ENCODE measurements at regions of chr19 and their contacts with region 1.

Region 1: GRCh38 chr19:38964738-38965137 is 10.8 kb downstream of the FBXO17 start:
- DNase-seq: no peak
- ATAC-seq: no peak
- H3K4me3 Mint-ChIP-seq: no peak overlapping the region
- H3K27ac Mint-ChIP-seq: no peak overlapping the region
- H3K4me1 Mint-ChIP-seq: peaks cover 3% of the 10 kb centered on the region
- H3K27me3 Mint-ChIP-seq: peaks cover 29% of the 10 kb centered on the region

Region 2: DNA sequence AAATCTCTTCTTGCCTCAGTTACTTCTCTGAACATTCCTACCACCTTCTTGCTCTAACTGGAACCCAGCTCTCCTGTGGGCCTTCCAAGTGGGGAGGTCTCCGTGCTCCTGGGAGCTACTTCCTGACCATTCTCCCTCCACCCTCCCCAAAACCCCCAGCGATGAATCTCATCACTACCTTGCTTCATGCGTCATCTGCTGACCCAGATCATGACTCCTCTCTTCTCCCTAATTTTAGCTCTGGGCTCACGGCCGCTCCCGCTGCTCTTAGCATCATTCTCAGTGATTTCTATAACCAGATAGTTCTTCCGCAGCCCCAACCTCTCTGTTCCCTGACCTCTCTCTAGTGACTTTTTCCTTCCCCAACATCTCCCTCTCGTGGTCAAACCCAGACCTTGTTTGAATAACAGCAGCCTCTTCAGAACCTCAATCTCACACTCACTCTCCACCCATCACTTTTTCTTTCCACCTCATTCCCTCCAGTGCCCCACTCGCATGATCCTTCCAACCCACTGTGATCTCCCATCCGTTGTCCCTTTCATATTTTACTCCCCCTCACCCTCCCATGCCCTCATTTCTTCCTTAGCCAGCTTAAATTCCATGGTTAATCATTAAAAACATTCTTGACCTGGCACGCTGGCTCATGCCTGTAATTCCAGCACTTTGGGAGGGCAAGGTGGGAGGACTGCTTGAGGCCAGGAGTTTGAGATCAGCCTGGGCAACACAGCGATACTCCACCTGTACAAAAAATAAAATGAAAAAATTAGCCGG is 12.2 kb before region 1 on chr19:
- CTCF ChIA-PET with region 1: interaction called, 13 read pairs
- DNase-seq: peak; percentile 65
- ATAC-seq: peak; percentile 48
- H3K4me3 Mint-ChIP-seq: no peak overlapping the region
- H3K27ac Mint-ChIP-seq: no peak overlapping the region
- H3K4me1 Mint-ChIP-seq: peaks cover 18% of the 10 kb centered on the region
- H3K27me3 Mint-ChIP-seq: peaks cover 35% of the 10 kb centered on the region

Region 3: DNA sequence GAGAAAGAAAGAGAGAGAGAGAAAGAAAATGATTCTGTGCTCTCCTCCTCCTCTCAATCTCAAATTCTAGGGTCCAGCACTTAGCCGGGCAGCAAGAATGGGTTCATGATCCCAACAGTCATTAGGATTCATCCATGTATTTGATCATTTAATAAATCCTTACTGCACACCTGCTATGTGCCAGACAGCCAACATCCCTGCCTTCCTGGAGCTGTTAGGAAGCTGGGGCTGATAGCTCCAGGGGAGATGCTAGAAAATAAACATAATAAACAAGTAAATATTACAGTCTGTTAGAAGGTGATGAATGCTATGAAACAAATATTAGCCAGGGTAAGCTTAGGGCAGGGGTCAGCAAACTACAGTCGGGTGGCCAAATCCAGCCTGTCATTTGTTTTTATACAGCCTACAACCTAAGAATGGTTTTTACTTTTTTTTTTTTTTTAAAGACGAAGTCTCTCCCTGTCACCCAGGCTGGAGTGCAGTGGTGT is 109.5 kb after region 1 on chr19:
- CTCF ChIA-PET with region 1: interaction called, 10 read pairs
- DNase-seq: no peak
- ATAC-seq: no peak
- H3K4me3 Mint-ChIP-seq: no peak overlapping the region
- H3K27ac Mint-ChIP-seq: peak overlapping the region; percentile 68
- H3K4me1 Mint-ChIP-seq: peaks cover 20% of the 10 kb centered on the region
- H3K27me3 Mint-ChIP-seq: no peaks in the 10 kb centered on the region

Measured in activated CD8-positive, alpha-beta memory T cell treated with anti-CD3 and anti-CD28 coated beads, Interleukin-2, amount 10 ng/mL, durations not matched to agents 7 days and 5 days (primary cell).